Gastrocnemius medialis (tissue), 4 donors: ENCODE measurements at regions of chr12 and their contacts with region 1.

Region 1: GRCh38 chr12:100142851-100143559 is at the start of gene BLTP3B:
- DNase-seq: peak; percentile 84 to 88
- ATAC-seq: peak; percentile 77 to 80
- H3K4me3 ChIP-seq: peak within 1 kb of the TSS; percentile 95 to 97 (median 96)
- H3K27ac ChIP-seq: peak within 1 kb of the TSS; percentile 96 to 98 (median 98)
- H3K4me1 ChIP-seq: peaks cover 12 to 31% of the 10 kb centered on the region in 2 donors
- H3K27me3 ChIP-seq: no peaks in the 10 kb centered on the region
- CTCF ChIP-seq: no peak
- POLR2A ChIP-seq: no peak
- total RNA-seq, gene BLTP3B: 33.6 to 71.3 (median 42.5) TPM

Region 2: DNA sequence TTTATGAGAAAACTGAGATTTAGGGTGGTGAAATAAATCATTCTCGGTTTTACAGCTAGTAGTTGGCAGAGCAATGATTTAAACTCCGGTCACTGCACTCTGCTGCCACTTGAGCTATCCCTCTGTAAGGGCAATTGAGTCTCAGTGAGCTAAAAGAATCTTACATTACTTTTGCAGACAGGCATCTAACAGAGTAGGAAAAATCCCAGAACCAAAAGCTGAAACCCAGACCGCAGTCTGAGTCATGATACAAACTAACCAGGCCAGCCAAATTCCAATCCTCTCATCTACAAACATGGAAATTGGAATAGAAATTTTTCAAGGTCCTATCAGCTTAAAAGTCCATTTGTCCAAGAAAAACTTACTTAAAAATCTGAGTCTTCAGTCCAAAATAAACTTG is 231.9 kb before region 1 on chr12:
- in situ Hi-C with region 1: no loop called
- intact Hi-C with region 1: loop called (anchors 2 kb)
- DNase-seq: peak; percentile 20 to 61
- ATAC-seq: peak; percentile 94
- H3K4me3 ChIP-seq: peak overlapping the region; percentile 10 to 27 (median 22)
- H3K27ac ChIP-seq: peak overlapping the region; percentile 65 to 79 (median 74)
- H3K4me1 ChIP-seq: peaks cover 0 to 18% of the 10 kb centered on the region in 2 donors
- H3K27me3 ChIP-seq: no peaks in the 10 kb centered on the region
- CTCF ChIP-seq: peak in 1 of 5 experiments; percentile 15
- POLR2A ChIP-seq: no peak